ENCODE measurements at regions of chr3 and their contacts with region 1.

Region 1: GRCh38 chr3:52001443-52001974 is 5.8 kb upstream of the RPL29 start:
- DNase-seq: peak in 1 of 2 donors; percentile 87
- H3K4me3 ChIP-seq: no peak overlapping the region
- H3K27ac ChIP-seq: no peak overlapping the region
- H3K4me1 ChIP-seq: peaks cover 0 to 19% of the 10 kb centered on the region in 2 donors
- H3K27me3 ChIP-seq: no peaks in the 10 kb centered on the region
- CTCF ChIP-seq: peak; percentile 91 to 98 (median 97)

Region 2: GRCh38 chr3:50961386-50961785 is 1040.1 kb before region 1 on chr3:
- intact Hi-C with region 1: no loop called
- DNase-seq: no peak
- H3K4me3 ChIP-seq: no peak overlapping the region
- H3K27ac ChIP-seq: no peak overlapping the region
- H3K4me1 ChIP-seq: no peaks in the 10 kb centered on the region
- H3K27me3 ChIP-seq: no peaks in the 10 kb centered on the region
- CTCF ChIP-seq: no peak

Region 3: GRCh38 chr3:52123106-52123725 is 121.7 kb after region 1 on chr3:
- intact Hi-C with region 1: loop called (anchors 1 kb)
- DNase-seq: peak in 1 of 2 donors; percentile 89
- H3K4me3 ChIP-seq: no peak overlapping the region
- H3K27ac ChIP-seq: no peak overlapping the region
- H3K4me1 ChIP-seq: peaks cover 0 to 6% of the 10 kb centered on the region in 2 donors
- H3K27me3 ChIP-seq: no peaks in the 10 kb centered on the region
- CTCF ChIP-seq: peak; percentile 90 to 98 (median 97)

Region 4: GRCh38 chr3:52144034-52144795 is 142.7 kb after region 1 on chr3:
- intact Hi-C with region 1: loop called (anchors 1 kb)
- DNase-seq: peak in 1 of 2 donors; percentile 92
- H3K4me3 ChIP-seq: no peak overlapping the region
- H3K27ac ChIP-seq: no peak overlapping the region
- H3K4me1 ChIP-seq: no peaks in the 10 kb centered on the region
- H3K27me3 ChIP-seq: no peaks in the 10 kb centered on the region
- CTCF ChIP-seq: peak; percentile 95 to 98 (median 96)

Region 5: GRCh38 chr3:52339612-52340011 is 338.1 kb after region 1 on chr3:
- intact Hi-C with region 1: loop called (anchors 5 kb)
- DNase-seq: no peak
- H3K4me3 ChIP-seq: no peak overlapping the region
- H3K27ac ChIP-seq: no peak overlapping the region
- H3K4me1 ChIP-seq: no peaks in the 10 kb centered on the region
- H3K27me3 ChIP-seq: no peaks in the 10 kb centered on the region
- CTCF ChIP-seq: peak; percentile 66 to 79 (median 68)